CD14-positive monocyte (primary cell): ENCODE measurements at regions of chr6 and their contacts with region 1.

Region 1: DNA sequence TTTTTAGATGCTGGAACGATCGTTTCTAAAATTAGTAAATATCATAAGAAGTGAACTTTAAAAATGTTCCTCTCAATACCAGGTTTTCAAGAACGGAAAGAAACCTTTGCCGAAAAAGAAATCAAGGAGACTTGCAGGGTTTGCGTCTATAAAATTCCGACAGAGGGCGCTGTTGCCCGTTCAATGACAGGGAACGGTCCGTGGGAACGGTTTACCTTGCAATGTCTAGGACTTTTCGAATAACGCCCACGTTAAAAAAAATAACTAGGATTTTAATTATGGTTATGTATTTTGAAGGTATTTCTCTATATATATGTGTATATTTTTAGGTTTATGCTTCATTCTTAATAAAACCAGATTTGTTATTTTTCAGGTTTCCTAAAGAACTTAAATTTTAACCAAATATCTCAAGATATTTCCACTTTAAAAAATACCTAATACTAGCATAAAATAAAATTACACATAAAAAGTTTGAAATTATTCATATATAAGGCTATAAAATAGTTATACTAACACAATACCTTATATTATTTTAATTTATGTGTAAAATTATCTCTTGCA is 2.5 kb upstream of the TFAP2B start:
- DNase-seq: peak; percentile 40 to 59 (median 57)
- H3K4me3 ChIP-seq: peak overlapping the region; percentile 45 to 81 (median 63)
- H3K4me3 Mint-ChIP-seq: peak overlapping the region; percentile 79 to 94
- H3K27ac ChIP-seq: no peak overlapping the region
- H3K27ac Mint-ChIP-seq: no peak overlapping the region
- H3K4me1 ChIP-seq: peaks cover 4 to 5% of the 10 kb centered on the region in 2 donors
- H3K4me1 Mint-ChIP-seq: peaks cover 21% of the 10 kb centered on the region
- H3K27me3 ChIP-seq: peaks cover 48 to 66% of the 10 kb centered on the region in 2 donors
- H3K27me3 Mint-ChIP-seq: peaks cover 53 to 72% (median 58%) of the 10 kb centered on the region in 3 donors
- CTCF ChIP-seq: peak; percentile 90

Region 2: GRCh38 chr6:51350308-51350904 is 534.2 kb after region 1 on chr6:
- intact Hi-C with region 1: loop called (anchors 5 kb)
- DNase-seq: peak; percentile 7 to 35 (median 10)
- H3K4me3 ChIP-seq: no peak overlapping the region
- H3K4me3 Mint-ChIP-seq: no peak overlapping the region
- H3K27ac ChIP-seq: no peak overlapping the region
- H3K27ac Mint-ChIP-seq: no peak overlapping the region
- H3K4me1 ChIP-seq: peaks cover 0 to 3% of the 10 kb centered on the region in 2 donors
- H3K4me1 Mint-ChIP-seq: peaks cover 4% of the 10 kb centered on the region
- H3K27me3 ChIP-seq: no peaks in the 10 kb centered on the region
- H3K27me3 Mint-ChIP-seq: peaks cover 4 to 8% (median 7%) of the 10 kb centered on the region in 3 donors
- CTCF ChIP-seq: peak; percentile 88

Region 3: DNA sequence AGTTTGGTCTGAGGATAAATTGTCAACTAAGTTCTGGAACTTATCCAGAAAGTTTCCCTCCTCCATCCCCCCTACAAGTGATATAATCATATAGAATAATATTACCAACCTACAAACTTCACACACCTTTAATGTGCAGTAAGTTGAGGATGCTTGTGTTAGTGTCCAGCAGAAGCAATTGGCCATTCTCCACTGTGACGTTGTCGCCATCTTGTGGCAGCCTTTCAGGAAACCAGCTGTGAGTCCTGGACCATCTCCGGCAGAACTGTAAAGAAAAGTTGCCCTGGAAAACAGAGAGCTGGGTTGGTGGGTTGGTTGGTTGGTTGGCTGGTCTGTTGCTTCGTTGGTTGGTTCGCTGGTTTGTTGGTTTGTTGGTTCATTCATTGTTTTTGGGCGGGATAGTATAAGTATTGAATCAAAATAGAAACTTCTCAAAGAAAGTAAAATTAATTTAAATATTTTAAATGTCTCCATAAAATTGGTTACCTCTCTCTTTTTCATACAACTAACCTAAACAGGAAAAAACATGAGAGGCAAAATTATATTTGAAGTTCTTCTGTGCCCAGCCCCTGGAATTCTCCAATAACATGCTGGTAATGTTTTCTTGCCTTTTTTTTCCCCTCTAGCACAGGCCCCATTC is 1143.7 kb after region 1 on chr6:
- intact Hi-C with region 1: loop called (anchors 5 to 10 kb)
- DNase-seq: peak; percentile 19 to 36 (median 35)
- H3K4me3 ChIP-seq: no peak overlapping the region
- H3K4me3 Mint-ChIP-seq: no peak overlapping the region
- H3K27ac ChIP-seq: no peak overlapping the region
- H3K27ac Mint-ChIP-seq: no peak overlapping the region
- H3K4me1 ChIP-seq: no peaks in the 10 kb centered on the region
- H3K4me1 Mint-ChIP-seq: no peaks in the 10 kb centered on the region
- H3K27me3 ChIP-seq: no peaks in the 10 kb centered on the region
- H3K27me3 Mint-ChIP-seq: peaks cover 5 to 11% (median 8%) of the 10 kb centered on the region in 3 donors
- CTCF ChIP-seq: peak; percentile 59

Region 4: DNA sequence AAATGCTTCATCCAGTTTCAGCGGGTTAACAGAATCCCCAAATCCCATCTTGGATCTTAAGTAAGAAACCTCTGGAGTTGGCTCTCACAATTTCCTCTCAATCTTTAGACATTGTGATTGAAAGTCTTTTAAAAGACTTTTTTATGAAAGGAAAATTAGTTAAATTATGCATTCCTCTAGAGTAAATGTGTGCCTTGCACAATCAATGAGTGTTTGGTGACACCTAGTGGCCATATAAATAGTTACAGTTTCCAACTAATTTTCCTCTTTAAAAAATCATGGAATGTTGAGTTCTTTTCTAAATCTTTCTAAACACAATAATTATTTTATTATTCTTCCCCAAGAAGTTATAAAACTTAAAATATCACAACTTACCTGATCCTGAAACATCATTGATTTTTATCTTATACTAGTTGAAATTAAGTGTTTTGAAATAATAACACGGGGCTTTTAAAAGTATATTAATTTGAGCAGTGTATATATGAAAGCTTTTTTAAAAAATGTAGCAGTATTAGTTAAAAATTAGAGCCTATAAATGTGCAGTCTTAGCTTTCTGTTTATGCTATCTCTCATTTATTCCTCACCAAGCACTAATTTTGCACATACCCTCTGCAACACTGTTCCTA is 1204.9 kb after region 1 on chr6:
- intact Hi-C with region 1: loop called (anchors 10 kb)
- DNase-seq: peak in 2 of 3 donors; percentile 5 to 38
- H3K4me3 ChIP-seq: no peak overlapping the region
- H3K4me3 Mint-ChIP-seq: no peak overlapping the region
- H3K27ac ChIP-seq: no peak overlapping the region
- H3K27ac Mint-ChIP-seq: no peak overlapping the region
- H3K4me1 ChIP-seq: no peaks in the 10 kb centered on the region
- H3K4me1 Mint-ChIP-seq: no peaks in the 10 kb centered on the region
- H3K27me3 ChIP-seq: no peaks in the 10 kb centered on the region
- H3K27me3 Mint-ChIP-seq: peaks cover 0 to 3% (median 2%) of the 10 kb centered on the region in 3 donors
- CTCF ChIP-seq: peak; percentile 94

Region 5: GRCh38 chr6:52263709-52264540 is 1447.7 kb after region 1 on chr6:
- intact Hi-C with region 1: loop called in 1 of 2 experiments (anchors 10 kb)
- DNase-seq: peak; percentile 20 to 54 (median 42)
- H3K4me3 ChIP-seq: no peak overlapping the region
- H3K4me3 Mint-ChIP-seq: no peak overlapping the region
- H3K27ac ChIP-seq: no peak overlapping the region
- H3K27ac Mint-ChIP-seq: no peak overlapping the region
- H3K4me1 ChIP-seq: no peaks in the 10 kb centered on the region
- H3K4me1 Mint-ChIP-seq: no peaks in the 10 kb centered on the region
- H3K27me3 ChIP-seq: no peaks in the 10 kb centered on the region
- H3K27me3 Mint-ChIP-seq: no peaks in the 10 kb centered on the region
- CTCF ChIP-seq: peak; percentile 94